ENCODE measurements at regions of chr15 and their contacts with region 1.

Region 1: GRCh38 chr15:73972984-73973682 is 19.0 kb downstream of the STOML1 start:
- DNase-seq: peak; percentile 92
- H3K4me3 Mint-ChIP-seq: peak overlapping the region; percentile 15
- H3K27ac Mint-ChIP-seq: no peak overlapping the region
- H3K4me1 Mint-ChIP-seq: peaks cover 31% of the 10 kb centered on the region
- H3K27me3 Mint-ChIP-seq: no peaks in the 10 kb centered on the region

Region 2: DNA sequence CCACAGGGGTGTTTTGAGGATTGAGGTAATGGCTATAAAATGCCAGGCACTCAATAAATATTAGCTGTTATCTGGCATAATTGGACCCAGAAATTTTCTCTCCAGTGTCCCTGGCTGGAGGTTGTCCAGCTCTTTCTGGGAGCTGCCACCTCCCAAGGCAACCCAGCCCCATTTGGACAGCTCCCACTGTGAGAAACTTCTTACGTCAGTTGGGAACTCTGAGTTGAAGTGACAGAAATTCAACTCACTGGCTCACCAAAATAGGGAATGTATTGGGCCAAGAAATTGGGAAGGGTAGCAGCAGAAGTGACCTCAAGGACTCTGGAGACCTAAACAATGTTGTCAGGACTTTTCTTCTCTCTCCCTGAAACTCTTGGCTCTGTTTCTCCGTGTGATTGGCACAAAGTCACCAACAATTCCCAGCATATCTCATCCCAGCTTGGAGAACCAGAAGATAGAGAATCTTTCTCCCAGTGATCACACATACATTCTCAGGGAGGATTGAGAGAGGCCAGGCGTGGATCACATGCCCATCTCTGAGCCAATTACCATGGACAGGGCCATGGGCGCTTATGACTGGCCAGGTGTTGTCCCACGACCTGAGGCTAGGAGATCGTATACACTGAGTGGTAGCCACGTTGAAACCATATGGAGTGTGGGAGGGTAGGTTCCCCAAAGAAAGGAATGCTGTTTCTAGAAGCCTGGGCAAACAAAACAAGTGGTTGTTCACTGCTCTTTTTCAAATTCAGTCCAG is 581.8 kb before region 1 on chr15:
- CTCF ChIA-PET with region 1: no interaction called
- intact Hi-C with region 1: no loop called
- DNase-seq: no peak
- H3K4me3 Mint-ChIP-seq: no peak overlapping the region
- H3K27ac Mint-ChIP-seq: no peak overlapping the region
- H3K4me1 Mint-ChIP-seq: no peaks in the 10 kb centered on the region
- H3K27me3 Mint-ChIP-seq: peaks cover 9% of the 10 kb centered on the region

Region 3: DNA sequence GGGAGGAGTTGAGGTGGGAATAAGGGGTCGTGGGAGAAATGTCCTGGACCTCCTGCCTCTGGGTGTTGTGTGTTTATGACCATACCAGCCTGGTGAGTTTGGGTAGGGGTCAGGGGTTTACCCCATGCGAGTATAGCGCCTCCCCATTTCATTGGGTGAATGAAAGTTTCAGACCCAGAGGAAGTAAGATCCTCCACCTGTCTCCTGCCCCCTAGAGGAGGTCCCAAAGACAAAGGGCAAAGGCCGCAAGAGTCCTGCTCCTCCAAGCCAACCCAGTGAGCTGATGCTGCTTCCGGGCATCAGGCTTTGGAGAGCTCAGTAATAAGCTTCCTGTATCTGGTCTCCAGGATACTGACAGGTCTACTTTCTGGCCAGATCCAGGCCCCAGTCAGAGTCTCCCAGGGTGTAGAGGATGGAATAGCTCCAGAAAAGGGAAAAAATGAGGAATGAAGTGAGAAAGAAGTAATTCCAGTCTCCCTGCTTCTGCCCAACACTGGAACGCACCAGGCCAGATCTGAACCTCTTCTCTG is 106.2 kb before region 1 on chr15:
- CTCF ChIA-PET with region 1: no interaction called
- intact Hi-C with region 1: no loop called
- DNase-seq: no peak
- H3K4me3 Mint-ChIP-seq: no peak overlapping the region
- H3K27ac Mint-ChIP-seq: no peak overlapping the region
- H3K4me1 Mint-ChIP-seq: peaks cover 10% of the 10 kb centered on the region
- H3K27me3 Mint-ChIP-seq: peaks cover 11% of the 10 kb centered on the region

Region 4: GRCh38 chr15:73991726-73992593 is 18.8 kb after region 1 on chr15 and contains the start of gene STOML1:
- CTCF ChIA-PET with region 1: interaction called, 54 read pairs
- intact Hi-C with region 1: loop called (anchors 1 kb)
- DNase-seq: peak; percentile 95
- H3K4me3 Mint-ChIP-seq: peak within 1 kb of the TSS; percentile 95
- H3K27ac Mint-ChIP-seq: peak within 1 kb of the TSS; percentile 83
- H3K4me1 Mint-ChIP-seq: peaks cover 49% of the 10 kb centered on the region
- H3K27me3 Mint-ChIP-seq: no peaks in the 10 kb centered on the region
- total RNA-seq, gene STOML1: 8.7 to 9.5 TPM

Region 5: DNA sequence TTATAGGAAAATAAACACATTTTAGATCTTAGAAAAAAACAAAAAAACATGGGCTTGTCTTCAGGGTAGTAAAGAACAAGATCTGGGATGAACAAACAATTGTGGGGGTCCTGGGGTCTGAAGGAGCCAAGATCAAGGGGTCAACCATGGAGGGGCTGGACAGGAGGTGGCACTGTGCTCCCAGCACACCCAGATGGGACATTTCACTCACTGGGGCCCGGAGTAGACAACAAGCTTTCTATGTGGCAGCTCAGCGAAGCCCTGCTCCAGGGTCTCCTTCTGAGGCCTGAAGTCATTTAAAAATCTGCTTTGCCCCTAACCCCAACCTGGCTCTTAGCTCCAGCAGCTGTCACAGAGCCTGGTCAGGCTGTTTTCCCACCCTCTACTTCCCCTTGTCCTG is 74.6 kb after region 1 on chr15:
- CTCF ChIA-PET with region 1: interaction called, 167 read pairs
- intact Hi-C with region 1: loop called (anchors 2 kb)
- DNase-seq: no peak
- H3K4me3 Mint-ChIP-seq: no peak overlapping the region
- H3K27ac Mint-ChIP-seq: no peak overlapping the region
- H3K4me1 Mint-ChIP-seq: peaks cover 10% of the 10 kb centered on the region
- H3K27me3 Mint-ChIP-seq: no peaks in the 10 kb centered on the region

Region 6: DNA sequence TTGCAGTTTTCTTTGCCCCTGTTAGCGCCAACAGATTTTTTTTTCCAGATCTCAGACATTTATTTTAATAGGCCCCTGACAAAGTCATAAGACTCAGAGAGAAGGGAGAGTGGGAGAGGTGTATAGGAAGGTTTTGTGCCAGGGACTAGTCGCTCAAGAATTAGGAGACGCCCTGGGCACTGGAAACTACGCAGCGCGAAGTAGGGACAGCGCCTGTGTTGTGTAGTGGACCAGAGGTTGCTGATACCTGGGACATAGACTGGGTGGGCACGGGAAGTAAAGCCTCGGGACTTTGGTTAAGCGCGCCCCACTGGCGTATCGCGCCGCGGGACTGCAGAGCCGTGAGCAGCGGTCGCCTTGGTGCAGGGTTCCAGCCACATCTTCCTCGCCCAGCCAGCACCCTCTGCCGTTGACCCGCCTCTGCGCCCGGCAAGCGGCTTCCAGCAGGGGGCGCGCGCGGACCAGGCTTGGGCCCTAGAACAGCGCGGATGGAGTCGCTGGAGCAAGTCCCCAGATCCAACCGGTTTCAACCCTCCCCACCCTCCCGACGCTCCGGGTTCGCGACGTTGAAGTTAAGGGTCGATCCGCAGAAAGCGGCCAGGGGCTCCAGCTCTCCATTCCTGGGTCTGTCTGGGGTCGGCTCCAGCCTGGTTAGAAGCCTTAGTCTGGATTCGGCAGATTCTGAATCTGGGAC is 154.3 kb after region 1 on chr15:
- CTCF ChIA-PET with region 1: interaction called, 12 read pairs
- intact Hi-C with region 1: loop called (anchors 10 kb)
- DNase-seq: peak; percentile 90
- H3K4me3 Mint-ChIP-seq: peak overlapping the region; percentile 15
- H3K27ac Mint-ChIP-seq: no peak overlapping the region
- H3K4me1 Mint-ChIP-seq: peaks cover 26% of the 10 kb centered on the region
- H3K27me3 Mint-ChIP-seq: peaks cover 57% of the 10 kb centered on the region

Region 7: GRCh38 chr15:74322181-74323076 is 349.3 kb after region 1 on chr15:
- CTCF ChIA-PET with region 1: interaction called, 6 read pairs
- intact Hi-C with region 1: loop called (anchors 1 kb)
- DNase-seq: peak; percentile 68
- H3K4me3 Mint-ChIP-seq: no peak overlapping the region
- H3K27ac Mint-ChIP-seq: no peak overlapping the region
- H3K4me1 Mint-ChIP-seq: peaks cover 5% of the 10 kb centered on the region
- H3K27me3 Mint-ChIP-seq: no peaks in the 10 kb centered on the region